ENCODE measurements at regions of chrX and their contacts with region 1.

Region 1: DNA sequence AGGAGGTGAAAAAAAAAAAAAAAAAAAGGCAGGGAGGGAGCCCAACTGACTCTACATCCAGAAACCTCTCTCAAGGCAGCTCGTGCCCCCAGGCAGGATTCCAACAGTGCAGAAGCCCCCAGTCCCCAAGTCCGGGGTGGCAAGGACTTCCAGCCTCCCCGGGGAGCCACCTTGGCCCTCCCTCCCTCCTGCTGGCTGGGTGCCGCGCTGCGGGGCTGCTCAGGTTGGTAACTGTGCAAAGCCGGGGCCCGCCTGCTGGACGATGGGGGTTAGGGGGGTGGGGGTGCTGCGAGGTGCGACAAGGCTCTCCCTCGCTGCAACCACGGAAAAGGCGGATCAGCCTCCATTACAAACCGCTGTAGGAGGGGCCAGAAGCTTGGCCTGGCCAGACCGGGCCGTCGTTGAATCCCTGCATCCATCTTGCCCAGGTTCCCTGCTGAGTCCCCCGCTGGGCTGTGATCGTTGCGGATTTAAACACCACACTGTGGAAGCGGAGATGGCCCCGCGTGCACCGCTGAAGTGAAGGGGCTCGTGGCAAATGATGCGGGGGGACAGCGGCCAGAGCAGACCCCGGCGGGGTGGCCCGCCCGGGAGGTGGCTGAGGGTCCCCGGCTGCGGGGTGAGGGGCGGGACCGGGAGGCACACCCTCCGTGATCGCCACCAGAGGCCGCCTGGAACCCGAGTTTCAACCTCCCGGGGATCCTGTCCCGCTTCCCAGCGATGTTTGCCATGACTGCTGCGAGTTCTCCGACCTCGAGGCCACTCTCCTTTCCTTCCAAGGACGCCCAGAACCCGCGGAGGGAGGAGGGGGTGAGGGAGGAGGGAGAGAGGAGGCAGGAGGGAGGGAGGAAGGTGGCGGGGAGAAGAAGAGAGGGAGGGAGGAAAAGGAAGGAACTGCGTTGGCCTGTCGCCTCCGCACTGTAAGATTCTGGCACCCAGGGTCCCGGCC is 58.0 kb upstream of the DDX3X start:
- DNase-seq: peak; percentile 56 to 78 (median 61)
- ATAC-seq: peak; percentile 85 to 93 (median 88)
- H3K4me3 ChIP-seq: peak overlapping the region; percentile 1 to 72 (median 52)
- H3K27ac ChIP-seq: peak overlapping the region in 3 of 12 donors; percentile 54 to 68 (median 57)
- H3K4me1 ChIP-seq: peaks cover 0 to 15% (median 0%) of the 10 kb centered on the region in 12 donors
- H3K27me3 ChIP-seq: peaks cover 0 to 35% (median 0%) of the 10 kb centered on the region in 9 donors
- CTCF ChIP-seq: peak in 11 of 12 donors; percentile 31 to 62 (median 51)
- POLR2A ChIP-seq: no peak

Region 2: DNA sequence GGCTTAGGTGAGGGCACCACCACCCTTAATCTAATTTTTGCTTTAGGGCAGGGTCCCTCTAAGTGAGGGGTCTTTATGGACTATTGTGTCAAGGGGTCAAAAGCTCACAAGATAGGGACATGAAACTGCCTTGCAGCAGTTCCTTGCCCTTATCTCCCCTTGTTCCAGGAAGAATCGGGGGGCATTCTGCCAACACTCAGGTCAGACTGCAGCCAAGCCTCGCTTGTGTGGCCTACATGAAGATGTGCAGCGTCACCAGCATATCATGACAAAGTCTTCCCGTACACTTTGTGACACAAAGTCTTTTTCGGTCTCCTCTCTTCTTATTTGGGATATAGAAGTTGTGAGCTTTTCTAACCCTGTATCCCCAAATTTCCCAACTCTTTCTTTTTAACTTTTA is 208.2 kb before region 1 on chrX:
- intact Hi-C with region 1: no loop called
- DNase-seq: peak in 1 of 5 donors; percentile 40
- ATAC-seq: peak in 2 of 4 donors; percentile 34 to 53
- H3K4me3 ChIP-seq: no peak overlapping the region
- H3K27ac ChIP-seq: no peak overlapping the region
- H3K4me1 ChIP-seq: no peaks in the 10 kb centered on the region
- H3K27me3 ChIP-seq: peaks cover 0 to 45% (median 0%) of the 10 kb centered on the region in 9 donors
- CTCF ChIP-seq: no peak
- POLR2A ChIP-seq: no peak

Region 3: GRCh38 chrX:41108007-41108406 is 167.9 kb before region 1 on chrX:
- intact Hi-C with region 1: no loop called
- DNase-seq: no peak
- ATAC-seq: peak in 1 of 4 donors; percentile 32
- H3K4me3 ChIP-seq: no peak overlapping the region
- H3K27ac ChIP-seq: peak overlapping the region in 1 of 12 donors; percentile 0
- H3K4me1 ChIP-seq: peaks cover 0 to 62% (median 37%) of the 10 kb centered on the region in 12 donors
- H3K27me3 ChIP-seq: no peaks in the 10 kb centered on the region
- CTCF ChIP-seq: no peak
- POLR2A ChIP-seq: no peak

Region 4: DNA sequence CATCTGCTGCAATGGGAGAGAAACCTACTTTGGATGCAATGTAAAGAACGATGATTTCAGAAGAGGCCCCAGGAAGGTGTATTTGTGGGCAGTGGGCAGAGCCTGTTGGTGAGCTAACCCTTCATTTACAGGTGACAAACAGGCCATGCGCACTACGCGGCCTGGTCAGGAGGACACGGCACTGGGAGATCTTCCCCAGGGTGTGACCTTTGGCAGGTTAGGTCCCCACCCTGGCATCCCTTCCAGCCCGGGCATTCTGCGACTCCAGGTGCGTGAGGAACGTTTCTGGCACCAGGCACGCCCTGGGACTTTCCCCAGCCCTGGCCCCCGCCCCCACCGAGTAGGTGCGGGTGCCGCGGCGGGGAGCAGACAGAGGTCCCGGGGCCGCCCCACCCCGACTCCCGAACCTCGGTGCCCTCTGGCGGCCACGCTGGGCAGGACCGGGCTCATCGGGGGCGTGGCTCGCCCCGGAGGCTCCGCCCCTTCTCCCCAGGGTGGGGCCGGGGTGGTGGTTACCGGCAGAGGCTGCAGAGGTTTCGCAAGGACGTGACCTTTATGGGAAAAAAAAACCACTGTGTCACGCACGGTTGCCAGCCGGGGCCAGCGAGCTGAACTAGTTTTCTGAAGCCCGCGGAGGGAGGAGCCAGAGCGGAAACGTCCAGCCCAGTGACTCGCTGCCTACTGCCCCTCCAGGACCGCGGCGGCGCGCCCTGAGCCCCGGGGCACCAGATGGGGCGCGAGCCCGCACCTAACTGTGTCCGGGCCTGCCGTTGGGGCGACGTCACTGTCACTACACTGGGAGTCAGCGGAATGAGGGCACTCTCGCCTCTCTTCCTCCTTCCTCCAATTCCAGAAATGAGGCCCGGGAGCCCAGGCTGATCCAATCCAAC is 166.2 kb after region 1 on chrX:
- intact Hi-C with region 1: loop called in 5 of 10 experiments (anchors 5 to 10 kb)
- DNase-seq: peak; percentile 74 to 91 (median 86)
- ATAC-seq: peak; percentile 92 to 95 (median 94)
- H3K4me3 ChIP-seq: peak overlapping the region in 10 of 12 donors; percentile 33 to 54 (median 44)
- H3K27ac ChIP-seq: peak overlapping the region; percentile 41 to 89 (median 67)
- H3K4me1 ChIP-seq: peaks cover 0 to 12% (median 2%) of the 10 kb centered on the region in 12 donors
- H3K27me3 ChIP-seq: peaks cover 0 to 12% (median 0%) of the 10 kb centered on the region in 9 donors
- CTCF ChIP-seq: peak; percentile 49 to 79 (median 59)
- POLR2A ChIP-seq: peak in 1 of 2 donors; percentile 44

Region 5: DNA sequence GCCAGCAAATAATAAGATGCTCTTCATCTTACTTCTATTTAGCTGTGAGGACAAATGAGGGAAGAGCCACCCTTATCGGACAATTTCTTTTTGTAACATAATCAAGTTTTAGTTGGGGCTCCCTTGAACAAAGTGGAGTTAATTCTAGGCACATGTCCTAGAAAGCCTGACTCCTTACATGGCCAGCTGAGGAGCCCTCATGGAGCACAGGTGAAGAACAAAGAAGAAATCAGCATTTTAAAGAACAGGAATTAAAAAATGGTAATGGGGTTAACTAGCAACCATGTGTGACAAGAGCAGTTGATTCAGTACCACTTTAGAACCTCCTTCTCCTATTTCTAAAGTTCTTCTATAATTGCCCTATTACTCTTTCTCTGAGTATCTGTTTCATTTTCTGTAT is 463.9 kb after region 1 on chrX:
- intact Hi-C with region 1: loop called in 1 of 10 experiments (anchors 10 kb)
- DNase-seq: no peak
- ATAC-seq: no peak
- H3K4me3 ChIP-seq: no peak overlapping the region
- H3K27ac ChIP-seq: no peak overlapping the region
- H3K4me1 ChIP-seq: peaks cover 0 to under 1% (median 0%) of the 10 kb centered on the region in 12 donors
- H3K27me3 ChIP-seq: no peaks in the 10 kb centered on the region
- CTCF ChIP-seq: no peak
- POLR2A ChIP-seq: no peak

Region 6: GRCh38 chrX:41759817-41760216 is 483.9 kb after region 1 on chrX:
- intact Hi-C with region 1: loop called in 1 of 10 experiments (anchors 5 kb)
- DNase-seq: no peak
- ATAC-seq: no peak
- H3K4me3 ChIP-seq: no peak overlapping the region
- H3K27ac ChIP-seq: no peak overlapping the region
- H3K4me1 ChIP-seq: no peaks in the 10 kb centered on the region
- H3K27me3 ChIP-seq: no peaks in the 10 kb centered on the region
- CTCF ChIP-seq: peak; percentile 15 to 60 (median 45)
- POLR2A ChIP-seq: no peak